ENCODE measurements at regions of chr2 and their contacts with region 1.

Region 1: GRCh38 chr2:44244129-44244871 is 31.0 kb upstream of the SLC3A1 start:
- DNase-seq: peak; percentile 12 to 75 (median 64)
- ATAC-seq: peak; percentile 96
- H3K4me3 ChIP-seq: peak overlapping the region; percentile 55
- H3K4me3 Mint-ChIP-seq: peak overlapping the region; percentile 71 to 95 (median 87)
- H3K27ac ChIP-seq: peak overlapping the region; percentile 64
- H3K27ac Mint-ChIP-seq: peak overlapping the region in 8 of 9 donors; percentile 39 to 89 (median 74)
- H3K4me1 ChIP-seq: peaks cover 6 to 9% of the 10 kb centered on the region in 2 donors
- H3K4me1 Mint-ChIP-seq: peaks cover 7 to 41% (median 33%) of the 10 kb centered on the region in 7 donors
- H3K27me3 ChIP-seq: no peaks in the 10 kb centered on the region
- H3K27me3 Mint-ChIP-seq: peaks cover 0 to 7% (median 0%) of the 10 kb centered on the region in 5 donors

Region 2: DNA sequence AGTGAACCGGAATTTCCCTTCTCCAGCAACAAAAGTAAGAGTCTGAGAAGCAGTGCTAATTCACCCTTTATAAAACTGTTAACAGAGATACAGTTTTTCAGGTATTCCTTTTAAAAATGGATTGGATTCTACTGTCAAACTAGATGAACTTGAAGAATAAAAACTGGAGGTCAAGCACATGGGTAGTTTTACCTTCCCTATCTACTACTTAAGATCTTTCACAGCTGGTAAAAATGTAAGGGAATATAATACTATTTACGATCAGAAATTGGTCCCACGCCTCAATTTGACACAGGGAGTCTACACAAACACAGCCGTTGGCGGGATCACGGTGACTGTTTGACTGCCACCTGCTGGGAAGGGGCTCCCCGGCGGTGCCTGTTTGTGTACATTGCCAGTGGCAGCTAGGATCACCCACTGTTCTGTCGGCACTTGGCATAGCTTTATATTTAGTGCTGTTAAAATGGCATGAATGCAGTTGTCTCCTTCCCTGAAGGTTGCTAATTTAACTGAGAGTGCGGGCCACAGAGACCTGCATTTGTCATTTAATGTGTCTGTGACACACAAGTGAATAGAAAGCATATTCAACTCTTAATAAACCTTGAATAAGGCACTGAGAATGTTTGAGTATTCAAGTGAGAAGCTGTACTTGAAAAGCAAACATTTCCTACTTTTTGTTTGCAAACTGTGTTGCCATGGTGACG is 346.0 kb before region 1 on chr2:
- CTCF ChIA-PET with region 1: no interaction called
- POLR2A ChIA-PET with region 1: no interaction called
- intact Hi-C with region 1: no loop called
- DNase-seq: no peak
- ATAC-seq: no peak
- H3K4me3 ChIP-seq: no peak overlapping the region
- H3K4me3 Mint-ChIP-seq: no peak overlapping the region
- H3K27ac ChIP-seq: no peak overlapping the region
- H3K27ac Mint-ChIP-seq: no peak overlapping the region
- H3K4me1 ChIP-seq: no peaks in the 10 kb centered on the region
- H3K4me1 Mint-ChIP-seq: no peaks in the 10 kb centered on the region
- H3K27me3 ChIP-seq: no peaks in the 10 kb centered on the region
- H3K27me3 Mint-ChIP-seq: no peaks in the 10 kb centered on the region

Region 3: DNA sequence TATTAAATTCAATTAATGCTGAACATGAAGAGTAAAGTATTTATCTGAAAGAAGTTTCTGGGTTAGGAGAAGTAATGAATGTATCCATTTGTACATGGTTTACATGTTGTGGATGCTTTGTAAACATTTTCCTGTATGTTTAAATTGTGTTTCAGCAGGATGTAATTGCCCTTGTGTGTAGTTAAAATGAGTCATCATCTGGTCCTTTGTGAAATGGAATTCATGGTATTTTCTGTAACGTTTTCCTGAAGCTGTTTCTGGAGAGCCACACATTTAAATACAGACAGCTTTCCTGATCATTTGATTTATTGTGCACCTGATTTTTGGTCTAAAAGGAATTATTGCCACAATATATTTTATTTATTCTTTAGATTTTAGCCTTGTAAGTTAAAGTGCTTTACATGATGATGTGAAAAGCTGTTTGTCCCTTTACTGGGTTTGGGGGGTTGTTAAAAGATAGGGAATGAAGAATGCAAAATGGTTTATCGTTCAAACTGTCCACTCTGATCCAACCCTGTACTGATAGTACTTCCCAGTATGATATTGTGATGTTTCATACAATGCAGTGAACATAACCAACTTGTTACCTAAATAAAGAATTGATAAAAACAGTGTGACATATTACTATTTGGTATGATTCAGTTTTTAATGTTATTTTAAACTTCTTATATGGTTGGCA is 10.7 kb before region 1 on chr2:
- CTCF ChIA-PET with region 1: interaction called, 4 read pairs
- POLR2A ChIA-PET with region 1: interaction called, 3 read pairs
- intact Hi-C with region 1: loop called in 1 of 2 experiments (anchors 1 kb)
- DNase-seq: no peak
- ATAC-seq: no peak
- H3K4me3 ChIP-seq: no peak overlapping the region
- H3K4me3 Mint-ChIP-seq: no peak overlapping the region
- H3K27ac ChIP-seq: no peak overlapping the region
- H3K27ac Mint-ChIP-seq: peak overlapping the region in 4 of 9 donors; percentile 25 to 71 (median 48)
- H3K4me1 ChIP-seq: peaks cover 16 to 17% of the 10 kb centered on the region in 2 donors
- H3K4me1 Mint-ChIP-seq: peaks cover 6 to 46% (median 36%) of the 10 kb centered on the region in 7 donors
- H3K27me3 ChIP-seq: no peaks in the 10 kb centered on the region
- H3K27me3 Mint-ChIP-seq: no peaks in the 10 kb centered on the region

Region 4: GRCh38 chr2:44267796-44268648 is 23.7 kb after region 1 on chr2:
- CTCF ChIA-PET with region 1: no interaction called
- POLR2A ChIA-PET with region 1: no interaction called
- intact Hi-C with region 1: no loop called
- DNase-seq: no peak
- ATAC-seq: no peak
- H3K4me3 ChIP-seq: no peak overlapping the region
- H3K4me3 Mint-ChIP-seq: no peak overlapping the region
- H3K27ac ChIP-seq: no peak overlapping the region
- H3K27ac Mint-ChIP-seq: no peak overlapping the region
- H3K4me1 ChIP-seq: no peaks in the 10 kb centered on the region
- H3K4me1 Mint-ChIP-seq: no peaks in the 10 kb centered on the region
- H3K27me3 ChIP-seq: no peaks in the 10 kb centered on the region
- H3K27me3 Mint-ChIP-seq: peaks cover 0 to 14% (median 0%) of the 10 kb centered on the region in 5 donors

Region 5: DNA sequence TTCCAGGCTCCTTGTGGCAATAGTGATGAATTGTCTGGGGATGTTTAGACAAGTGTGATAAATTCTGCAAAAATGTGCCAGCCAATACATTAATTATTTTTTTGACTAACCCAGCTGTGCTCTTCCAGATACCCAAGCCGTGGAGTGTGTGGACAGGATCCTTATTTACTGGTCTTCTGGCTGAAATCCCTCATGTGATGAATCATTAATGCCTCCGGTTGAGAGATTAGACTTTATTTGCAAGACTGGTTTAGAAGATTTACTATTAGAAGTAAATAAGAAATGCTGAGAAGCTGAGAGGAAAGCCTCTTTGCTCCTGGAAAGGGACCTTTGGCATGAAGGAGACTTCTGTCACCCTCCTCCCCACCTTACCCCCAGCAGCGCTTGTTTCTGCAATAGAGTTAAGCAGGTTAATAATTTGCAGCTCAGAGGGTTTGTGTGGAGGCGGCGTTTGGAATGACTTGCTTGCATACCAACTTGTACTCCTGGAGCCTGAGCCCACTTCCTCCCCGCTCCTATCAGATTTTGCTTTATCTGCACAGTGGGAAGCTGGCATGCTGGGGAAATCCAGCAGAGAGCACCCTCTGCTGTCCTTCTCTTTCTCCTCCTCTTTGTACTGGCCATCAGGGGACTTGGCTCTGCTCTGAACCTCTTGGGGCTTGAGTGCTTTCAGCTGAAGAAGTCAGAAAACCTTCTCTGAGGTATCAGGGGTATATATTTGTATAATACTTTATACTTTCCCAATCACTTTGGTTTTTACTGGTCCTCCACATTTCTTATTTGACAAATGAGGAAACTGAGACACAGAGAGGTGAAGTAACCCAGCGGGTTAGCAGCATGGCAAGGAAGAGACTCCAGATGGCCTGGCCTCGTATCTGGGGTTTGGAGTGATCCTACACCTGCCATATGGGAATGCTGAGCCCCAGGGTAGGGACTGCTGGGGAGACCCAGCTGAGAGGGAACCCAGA is 47.3 kb after region 1 on chr2:
- CTCF ChIA-PET with region 1: interaction called, 4 read pairs
- POLR2A ChIA-PET with region 1: no interaction called
- intact Hi-C with region 1: loop called in 1 of 2 experiments (anchors 2 kb)
- DNase-seq: no peak
- ATAC-seq: no peak
- H3K4me3 ChIP-seq: no peak overlapping the region
- H3K4me3 Mint-ChIP-seq: no peak overlapping the region
- H3K27ac ChIP-seq: no peak overlapping the region
- H3K27ac Mint-ChIP-seq: peak overlapping the region in 1 of 9 donors; percentile 33
- H3K4me1 ChIP-seq: peaks cover 0 to 1% of the 10 kb centered on the region in 2 donors
- H3K4me1 Mint-ChIP-seq: peaks cover 2 to 11% (median 10%) of the 10 kb centered on the region in 7 donors
- H3K27me3 ChIP-seq: no peaks in the 10 kb centered on the region
- H3K27me3 Mint-ChIP-seq: peaks cover 0 to 14% (median 5%) of the 10 kb centered on the region in 5 donors

Region 6: DNA sequence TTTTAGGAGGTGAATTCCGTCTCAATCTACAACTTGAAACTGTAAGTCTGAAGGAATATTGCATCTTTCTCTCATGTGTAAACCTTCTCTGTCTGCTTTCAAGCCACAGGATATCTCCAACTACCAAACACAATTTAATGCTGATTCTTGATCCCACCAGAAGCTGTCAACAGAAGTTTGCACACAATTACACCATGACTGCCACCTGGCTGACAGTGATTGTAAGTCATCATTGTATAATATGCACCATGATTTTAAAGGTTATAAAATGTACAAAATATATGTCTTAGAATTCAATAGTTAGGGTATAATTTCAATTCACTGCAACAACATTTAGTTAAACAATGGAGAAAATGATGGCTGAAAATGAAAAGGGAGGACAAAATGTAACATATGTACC is 98.6 kb after region 1 on chr2:
- CTCF ChIA-PET with region 1: interaction called, 10 read pairs
- POLR2A ChIA-PET with region 1: no interaction called
- intact Hi-C with region 1: loop called (anchors 1 kb)
- DNase-seq: peak in 7 of 9 donors; percentile 14 to 45 (median 33)
- ATAC-seq: peak; percentile 60
- H3K4me3 ChIP-seq: no peak overlapping the region
- H3K4me3 Mint-ChIP-seq: no peak overlapping the region
- H3K27ac ChIP-seq: no peak overlapping the region
- H3K27ac Mint-ChIP-seq: peak overlapping the region in 2 of 9 donors; percentile 5 to 26
- H3K4me1 ChIP-seq: no peaks in the 10 kb centered on the region
- H3K4me1 Mint-ChIP-seq: peaks cover 0 to 17% (median 0%) of the 10 kb centered on the region in 7 donors
- H3K27me3 ChIP-seq: no peaks in the 10 kb centered on the region
- H3K27me3 Mint-ChIP-seq: no peaks in the 10 kb centered on the region

Region 7: GRCh38 chr2:44955593-44956392 is 711.5 kb after region 1 on chr2:
- CTCF ChIA-PET with region 1: no interaction called
- POLR2A ChIA-PET with region 1: no interaction called
- intact Hi-C with region 1: loop called (anchors 1 kb)
- DNase-seq: peak; percentile 25 to 80 (median 64)
- ATAC-seq: peak; percentile 79
- H3K4me3 ChIP-seq: no peak overlapping the region
- H3K4me3 Mint-ChIP-seq: peak overlapping the region in 7 of 10 donors; percentile 5 to 72 (median 35)
- H3K27ac ChIP-seq: no peak overlapping the region
- H3K27ac Mint-ChIP-seq: peak overlapping the region in 1 of 9 donors; percentile 62
- H3K4me1 ChIP-seq: peaks cover 0 to 10% of the 10 kb centered on the region in 2 donors
- H3K4me1 Mint-ChIP-seq: peaks cover 13 to 32% (median 20%) of the 10 kb centered on the region in 7 donors
- H3K27me3 ChIP-seq: no peaks in the 10 kb centered on the region
- H3K27me3 Mint-ChIP-seq: peaks cover 50 to 77% (median 65%) of the 10 kb centered on the region in 5 donors

Measured in naive thymus-derived CD4-positive, alpha-beta T cell (primary cell).